Transverse colon (tissue), 4 donors: ENCODE measurements at regions of chr1 and their contacts with region 1.

Region 1: DNA sequence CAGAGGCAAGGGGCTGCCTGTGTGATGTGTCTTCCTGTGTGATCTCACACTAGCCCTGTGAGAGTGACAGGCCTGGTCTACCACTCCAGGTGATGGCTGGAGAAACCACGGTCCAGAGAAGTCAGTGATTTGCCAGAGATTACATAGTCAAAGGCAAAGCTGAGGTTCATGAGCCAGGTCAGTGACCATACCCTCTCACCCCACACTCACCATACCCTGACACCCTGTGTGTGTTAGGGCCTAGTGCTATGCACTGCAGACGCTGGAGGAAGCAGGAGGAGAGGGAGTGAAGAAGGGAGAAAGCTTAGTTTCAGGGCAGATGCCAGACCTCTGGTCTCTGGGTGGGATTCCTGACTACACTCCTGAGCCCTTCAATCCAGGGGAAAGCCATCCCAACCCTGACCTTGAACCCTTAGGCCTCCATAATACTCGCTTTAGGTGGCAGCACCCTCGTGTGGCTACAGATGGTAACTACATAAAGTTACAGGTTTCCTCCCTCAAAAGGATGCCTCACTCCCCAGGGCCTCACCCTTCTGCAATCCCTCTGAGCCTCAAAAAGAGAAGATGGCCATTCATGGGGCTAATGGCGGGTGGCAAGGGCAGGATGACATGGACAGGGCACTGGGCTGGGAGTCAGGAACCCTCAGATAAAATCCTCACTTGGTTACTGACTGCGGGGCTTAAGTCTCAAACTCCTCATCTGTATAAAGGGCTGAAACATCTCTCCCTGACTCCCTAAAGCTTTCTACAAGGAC is 20.8 kb upstream of the SDC3 start:
- DNase-seq: peak; percentile 31
- H3K4me3 ChIP-seq: no peak overlapping the region
- H3K27ac ChIP-seq: peak overlapping the region; percentile 17 to 47 (median 21)
- H3K4me1 ChIP-seq: peaks cover 0 to 23% (median 2%) of the 10 kb centered on the region in 4 donors
- H3K27me3 ChIP-seq: no peaks in the 10 kb centered on the region
- CTCF ChIP-seq: peak; percentile 69 to 73 (median 72)
- EP300 ChIP-seq: no peak
- POLR2A ChIP-seq: no peak

Region 2: GRCh38 chr1:30133414-30134055 is 795.8 kb before region 1 on chr1:
- in situ Hi-C with region 1: no loop called
- intact Hi-C with region 1: loop called (anchors 10 kb)
- DNase-seq: no peak
- H3K4me3 ChIP-seq: no peak overlapping the region
- H3K27ac ChIP-seq: no peak overlapping the region
- H3K4me1 ChIP-seq: no peaks in the 10 kb centered on the region
- H3K27me3 ChIP-seq: no peaks in the 10 kb centered on the region
- CTCF ChIP-seq: no peak
- EP300 ChIP-seq: no peak
- POLR2A ChIP-seq: no peak

Region 3: DNA sequence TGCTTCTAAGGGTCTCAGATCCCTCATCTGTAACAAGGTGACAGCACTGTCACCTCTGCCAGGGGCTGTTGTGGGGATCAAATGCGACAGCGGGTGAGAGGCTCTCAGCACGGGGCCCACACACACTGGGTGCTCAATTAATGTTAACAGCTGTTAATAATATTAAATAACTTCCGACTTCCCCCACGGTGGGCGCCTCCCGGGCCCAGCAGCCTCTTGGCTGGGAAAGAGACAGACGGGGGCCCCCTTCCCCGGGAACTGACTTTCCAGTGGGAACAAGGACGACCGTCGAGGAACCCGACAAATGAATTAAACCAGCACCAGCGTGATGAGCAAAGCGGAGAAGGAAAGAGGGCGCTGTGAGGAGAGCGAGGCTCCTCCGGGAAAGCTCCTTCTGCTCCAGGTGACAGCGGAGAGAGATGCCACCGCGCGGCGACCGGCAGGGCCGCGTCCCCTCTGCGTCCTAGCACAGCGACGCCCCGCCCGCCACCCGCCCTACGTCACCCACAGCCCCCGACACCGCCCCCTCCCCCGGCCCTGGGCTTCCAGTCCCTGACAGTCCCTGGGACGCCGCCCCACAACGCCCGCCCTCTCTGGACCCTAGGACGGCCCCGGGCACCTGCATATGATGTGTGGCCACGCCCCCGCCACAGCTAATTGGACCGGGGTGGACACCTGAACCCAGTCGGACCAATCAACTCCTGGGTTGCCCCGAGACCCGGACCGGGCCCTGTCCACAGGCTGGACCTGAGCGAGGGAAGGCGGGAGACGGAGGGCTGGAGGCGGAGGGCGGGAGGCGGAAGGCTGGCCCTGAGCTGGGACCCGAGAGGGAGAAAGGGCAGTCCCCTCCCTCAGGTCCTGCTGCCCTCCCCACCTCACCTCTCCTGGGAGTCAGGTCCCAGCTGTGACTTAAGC is 244.2 kb before region 1 on chr1:
- in situ Hi-C with region 1: no loop called
- intact Hi-C with region 1: no loop called
- DNase-seq: peak; percentile 78
- H3K4me3 ChIP-seq: peak overlapping the region in 2 of 4 donors; percentile 12 to 17
- H3K27ac ChIP-seq: peak overlapping the region in 1 of 4 donors; percentile 35
- H3K4me1 ChIP-seq: peaks cover 4 to 8% (median 6%) of the 10 kb centered on the region in 4 donors
- H3K27me3 ChIP-seq: peaks cover 48% of the 10 kb centered on the region
- CTCF ChIP-seq: peak in 1 of 5 experiments; percentile 6
- EP300 ChIP-seq: no peak
- POLR2A ChIP-seq: no peak

Region 4: DNA sequence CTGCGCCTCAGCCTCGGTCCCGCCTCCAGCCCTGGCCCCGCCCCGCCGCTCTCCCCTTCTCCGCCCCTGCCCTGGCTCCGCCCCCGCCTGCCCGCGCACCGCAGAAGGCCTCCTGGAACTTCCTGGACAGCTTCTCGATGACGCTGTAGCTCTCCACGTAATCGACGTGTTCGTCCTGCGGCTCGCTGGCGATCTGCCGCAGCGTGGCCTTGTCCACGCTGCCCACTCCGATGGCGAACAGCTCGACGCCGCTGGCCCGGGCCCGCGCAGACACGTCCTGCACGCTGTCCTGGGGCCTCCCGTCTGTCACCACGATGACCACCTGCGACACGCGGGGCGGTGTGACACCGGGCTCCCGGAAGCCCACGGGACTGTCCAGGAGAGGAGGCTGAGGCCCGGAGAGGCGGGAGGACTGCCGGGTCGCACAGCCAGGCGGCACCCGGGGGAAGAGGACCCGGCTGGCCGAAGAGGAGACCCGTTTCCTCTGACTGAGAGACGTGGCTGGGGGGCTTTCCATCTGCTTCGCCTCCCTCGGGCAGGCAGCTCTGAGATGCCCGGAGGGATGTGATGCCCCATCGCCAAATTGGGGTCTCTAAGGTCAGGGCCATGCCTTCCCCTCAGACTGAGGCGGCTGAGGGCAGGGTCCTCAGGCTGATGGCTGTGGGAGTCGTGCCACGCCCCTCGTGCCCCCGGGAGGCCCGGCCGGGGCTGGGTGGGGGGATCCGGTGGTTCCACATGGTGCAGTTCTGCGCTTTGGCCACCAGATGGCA is 210.5 kb before region 1 on chr1:
- in situ Hi-C with region 1: loop called in 1 of 4 experiments (anchors 10 kb)
- intact Hi-C with region 1: no loop called
- DNase-seq: peak; percentile 85
- H3K4me3 ChIP-seq: peak overlapping the region; percentile 25 to 57 (median 44)
- H3K27ac ChIP-seq: peak overlapping the region; percentile 94 to 99 (median 98)
- H3K4me1 ChIP-seq: peaks cover 5 to 15% (median 10%) of the 10 kb centered on the region in 4 donors
- H3K27me3 ChIP-seq: no peaks in the 10 kb centered on the region
- CTCF ChIP-seq: peak; percentile 99 to 100 (median 99)
- EP300 ChIP-seq: peak; percentile 53
- POLR2A ChIP-seq: peak; percentile 93